ENCODE measurements at regions of chr1 and their contacts with region 1.

Region 1: DNA sequence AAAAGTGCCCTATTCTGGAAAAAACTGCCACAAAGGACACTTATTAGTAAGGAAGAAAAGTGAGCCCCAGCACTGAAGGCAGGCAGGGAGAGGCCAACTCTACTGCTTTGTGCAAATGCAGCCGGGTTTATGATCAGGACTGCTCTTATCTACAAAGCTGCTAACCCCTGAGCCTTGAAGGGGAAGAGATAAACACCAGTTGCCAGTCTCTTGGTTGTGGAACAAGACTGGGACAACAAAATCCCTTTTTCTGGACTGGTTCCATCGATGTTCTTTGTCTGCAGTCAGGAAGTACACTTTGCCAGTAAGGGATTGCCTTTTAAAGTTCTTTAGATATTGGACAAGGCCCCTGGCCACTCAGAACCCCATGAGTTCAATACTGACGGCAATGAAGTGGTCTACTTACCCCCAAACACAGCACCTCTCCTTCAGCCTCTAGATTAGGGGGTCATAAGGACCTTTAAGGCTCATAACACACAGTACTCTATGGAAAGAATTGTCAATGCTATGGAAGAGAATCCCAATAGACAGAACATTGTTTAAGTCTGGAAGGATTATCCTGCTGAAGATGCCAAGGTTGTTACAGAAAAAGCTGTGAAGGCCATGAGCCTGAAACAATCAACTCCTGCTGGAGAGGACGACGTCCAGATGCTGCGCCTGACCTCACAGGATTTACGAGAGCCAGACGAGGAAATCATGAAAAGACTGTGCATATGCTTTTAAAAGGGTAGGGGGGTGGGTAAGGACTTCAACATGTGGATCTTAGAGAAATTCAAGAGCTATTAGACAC is 43.6 kb downstream of the GNB1 start:
- DNase-seq: no peak
- ATAC-seq: no peak
- H3K4me3 ChIP-seq: no peak overlapping the region
- H3K27ac ChIP-seq: peak overlapping the region; percentile 13; the same call in 1 of the 2 replicates
- H3K4me1 ChIP-seq: peaks cover 35% of the 10 kb centered on the region
- H3K27me3 ChIP-seq: no peaks in the 10 kb centered on the region
- CTCF ChIP-seq: no peak
- EP300 ChIP-seq: no peak
- POLR2A ChIP-seq: no peak
- RAD21 ChIP-seq: no peak

Region 2: GRCh38 chr1:1833916-1834325 is 13.3 kb before region 1 on chr1:
- CTCF ChIA-PET with region 1: no interaction called
- POLR2A ChIA-PET with region 1: interaction called, 3 read pairs
- RAD21 ChIA-PET with region 1: interaction called, 3 read pairs
- SMC1A ChIA-PET with region 1: interaction called, 10 read pairs
- in situ Hi-C with region 1: no loop called
- intact Hi-C with region 1: no loop called
- DNase-seq: peak; percentile 71
- ATAC-seq: peak; percentile 89
- H3K4me3 ChIP-seq: 0 out of 2 replicates have a peak overlapping the region, but pooled peaks have one; percentile 12
- H3K27ac ChIP-seq: peak overlapping the region; percentile 61
- H3K4me1 ChIP-seq: peaks cover 44% of the 10 kb centered on the region
- H3K27me3 ChIP-seq: no peaks in the 10 kb centered on the region
- CTCF ChIP-seq: no peak
- EP300 ChIP-seq: no peak
- POLR2A ChIP-seq: no peak
- RAD21 ChIP-seq: no peak

Region 3: DNA sequence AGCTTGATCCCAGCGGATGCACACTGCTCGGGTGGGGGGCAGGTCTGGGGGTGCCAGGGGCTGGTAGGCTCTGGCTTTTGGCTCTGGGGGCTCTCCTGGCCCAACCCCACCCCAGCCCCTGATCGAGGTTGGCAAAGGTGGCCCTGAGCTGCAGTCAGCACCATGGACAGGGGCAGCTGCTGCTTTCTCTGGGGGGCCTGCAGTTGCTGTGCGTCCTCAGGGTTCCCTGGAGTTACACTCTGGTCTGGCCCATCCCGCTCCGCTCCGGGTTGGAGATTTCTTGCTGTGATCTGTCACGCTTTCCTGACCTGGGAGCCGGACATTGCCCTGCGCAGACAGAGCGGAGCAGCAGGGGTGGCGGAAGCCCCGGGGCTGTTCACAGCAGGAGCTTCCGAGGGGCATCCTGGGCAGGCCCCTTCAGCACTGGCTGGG is 620.8 kb after region 1 on chr1:
- CTCF ChIA-PET with region 1: no interaction called
- POLR2A ChIA-PET with region 1: no interaction called
- RAD21 ChIA-PET with region 1: no interaction called
- SMC1A ChIA-PET with region 1: no interaction called
- in situ Hi-C with region 1: no loop called
- intact Hi-C with region 1: no loop called
- DNase-seq: no peak
- ATAC-seq: peak; percentile 49
- H3K4me3 ChIP-seq: no peak overlapping the region
- H3K27ac ChIP-seq: no peak overlapping the region
- H3K4me1 ChIP-seq: no peaks in the 10 kb centered on the region
- H3K27me3 ChIP-seq: no peaks in the 10 kb centered on the region
- CTCF ChIP-seq: no peak
- EP300 ChIP-seq: no peak
- POLR2A ChIP-seq: no peak
- RAD21 ChIP-seq: no peak